Psoas muscle (tissue), 8 donors: ENCODE measurements at regions of chr12 and their contacts with region 1.

Region 1: DNA sequence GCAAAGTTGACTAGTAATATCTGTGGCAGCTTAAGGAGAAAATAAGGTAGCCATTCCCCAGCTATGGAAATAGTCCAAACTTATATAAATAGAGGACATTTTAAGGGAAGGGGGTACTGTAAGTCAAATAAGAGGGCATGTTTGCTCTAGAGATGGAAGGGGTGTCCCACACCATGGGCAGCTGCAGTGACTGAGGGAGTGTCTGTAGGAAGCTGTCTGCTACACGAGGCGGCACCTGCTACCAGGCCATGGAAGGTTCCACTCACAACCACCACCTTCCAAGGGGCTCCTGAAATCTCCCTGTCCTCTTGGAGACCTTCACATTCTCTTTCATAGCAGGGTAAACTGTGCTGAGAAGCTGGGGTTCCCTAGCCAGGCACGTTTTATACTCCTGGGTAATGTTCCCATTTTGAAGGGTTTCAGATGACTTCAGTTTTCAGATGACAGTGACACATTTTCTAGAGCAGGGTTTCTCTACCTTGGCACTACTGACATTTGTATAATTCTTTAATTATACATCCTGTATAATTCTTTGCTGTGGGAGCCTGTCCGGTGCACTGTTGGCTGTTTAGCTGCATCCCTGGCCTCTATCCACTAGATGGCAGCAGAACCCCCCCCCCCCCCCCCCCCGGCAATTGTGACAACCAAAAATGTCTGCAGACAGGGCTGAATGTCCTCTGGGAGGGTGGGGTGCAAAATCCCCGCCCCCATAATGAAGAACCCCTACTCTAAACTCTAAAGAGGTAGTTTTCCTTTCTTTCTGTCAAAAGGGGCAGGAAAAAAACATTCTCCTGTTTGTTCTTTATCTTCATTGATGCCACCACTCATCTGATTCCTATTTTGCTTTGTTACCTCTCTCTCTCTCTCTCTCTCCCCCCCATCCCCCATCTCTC is 11.6 kb upstream of the SMCO2 start:
- DNase-seq: peak in 1 of 2 donors; percentile 10
- ATAC-seq: peak in 2 of 4 donors; percentile 53 to 73
- H3K4me3 ChIP-seq: no peak overlapping the region
- H3K27ac ChIP-seq: no peak overlapping the region
- H3K4me1 ChIP-seq: no peaks in the 10 kb centered on the region
- H3K27me3 ChIP-seq: peaks cover 0 to under 1% (median 0%) of the 10 kb centered on the region in 3 donors
- CTCF ChIP-seq: peak; percentile 40

Region 2: DNA sequence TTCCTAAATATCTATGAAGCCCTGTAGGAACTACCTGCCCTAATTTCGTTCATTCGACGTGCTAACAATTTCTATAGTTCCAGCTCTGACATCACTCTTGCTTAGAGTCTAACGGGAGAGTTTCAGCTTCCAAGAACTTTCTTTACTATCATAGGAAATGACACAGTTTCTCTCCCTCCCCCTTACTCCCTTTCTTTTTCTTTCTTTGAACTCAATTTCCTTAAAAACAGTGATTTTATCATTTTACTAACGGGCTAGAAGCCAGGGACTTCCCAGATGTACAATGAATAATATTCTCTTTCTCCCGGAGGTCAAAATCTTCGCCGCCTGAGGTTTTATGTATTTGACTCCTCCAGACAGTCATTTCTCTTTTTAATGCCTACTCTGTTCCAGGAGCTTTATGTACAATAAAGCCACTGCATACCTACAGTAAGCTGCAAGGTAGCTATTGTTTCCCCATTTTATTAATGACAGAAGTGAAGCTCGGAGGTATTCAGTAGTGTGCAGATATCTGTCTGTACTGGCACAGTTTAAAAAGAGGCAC is 27.3 kb after region 1 on chr12:
- intact Hi-C with region 1: no loop called
- DNase-seq: no peak
- ATAC-seq: no peak
- H3K4me3 ChIP-seq: no peak overlapping the region
- H3K27ac ChIP-seq: no peak overlapping the region
- H3K4me1 ChIP-seq: no peaks in the 10 kb centered on the region
- H3K27me3 ChIP-seq: peaks cover 0 to 4% (median 0%) of the 10 kb centered on the region in 3 donors
- CTCF ChIP-seq: no peak

Region 3: DNA sequence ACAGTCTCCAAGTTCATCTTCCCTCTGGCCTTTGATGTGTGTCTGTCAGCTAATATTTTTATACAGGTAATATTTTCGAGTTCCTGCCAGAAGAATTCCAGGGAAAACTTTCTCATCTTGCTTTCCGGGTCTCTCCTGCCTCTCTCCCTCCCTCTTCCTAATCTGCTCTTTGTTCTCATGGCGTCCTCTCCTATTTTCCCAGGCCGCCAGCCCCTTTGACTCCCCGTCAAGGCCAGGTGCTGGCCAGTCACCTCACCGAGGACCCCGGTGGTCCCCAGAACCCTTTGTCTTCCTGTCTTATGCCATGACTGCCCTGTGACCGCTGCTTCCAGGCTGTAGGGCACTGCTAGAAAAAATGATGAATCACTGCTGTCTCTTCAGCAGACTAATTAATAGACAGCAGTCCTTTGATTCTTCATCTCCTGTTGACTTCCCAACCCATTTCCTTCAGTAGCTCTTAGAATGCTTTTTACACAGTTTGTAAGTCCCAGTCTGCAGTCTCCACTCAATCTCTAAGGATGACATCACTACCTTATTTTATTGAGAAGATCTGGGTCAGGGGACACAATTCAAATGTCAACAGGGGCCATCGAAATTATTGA is 129.8 kb after region 1 on chr12:
- intact Hi-C with region 1: loop called (anchors 5 kb)
- DNase-seq: no peak
- ATAC-seq: no peak
- H3K4me3 ChIP-seq: no peak overlapping the region
- H3K27ac ChIP-seq: no peak overlapping the region
- H3K4me1 ChIP-seq: peaks cover 19% of the 10 kb centered on the region
- H3K27me3 ChIP-seq: no peaks in the 10 kb centered on the region
- CTCF ChIP-seq: no peak

Region 4: DNA sequence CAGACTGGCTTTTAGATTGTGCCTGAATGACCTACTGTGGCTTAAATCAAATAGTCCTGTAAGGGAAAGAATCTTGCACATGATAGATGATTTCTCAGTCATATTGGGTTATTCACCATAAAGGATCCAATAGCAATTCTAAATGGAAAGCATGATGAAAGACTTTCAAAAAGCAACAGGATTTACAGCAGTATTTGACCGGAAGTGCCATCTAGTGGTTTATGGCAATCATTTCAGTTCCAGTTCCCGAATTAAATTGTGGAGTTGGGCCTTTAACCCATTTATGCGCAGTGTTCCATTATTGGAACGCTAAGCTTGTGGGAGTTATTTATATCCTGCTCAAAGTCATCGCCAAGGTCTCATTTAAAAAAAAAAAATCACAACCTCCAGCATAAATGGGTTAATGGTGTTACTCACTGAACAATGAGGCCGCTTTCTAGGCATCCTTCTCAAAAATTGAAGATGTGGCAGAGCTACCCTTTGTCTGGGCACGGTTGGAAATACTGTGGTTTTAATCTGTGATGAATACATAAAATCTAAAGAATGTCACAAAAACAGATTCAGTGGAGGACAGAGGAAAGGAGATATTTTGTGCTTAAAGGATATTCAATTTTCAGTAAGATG is 200.5 kb after region 1 on chr12:
- intact Hi-C with region 1: loop called in 1 of 2 experiments (anchors 5 kb)
- DNase-seq: no peak
- ATAC-seq: peak in 3 of 4 donors; percentile 37 to 65 (median 39)
- H3K4me3 ChIP-seq: no peak overlapping the region
- H3K27ac ChIP-seq: no peak overlapping the region
- H3K4me1 ChIP-seq: peaks cover 16% of the 10 kb centered on the region
- H3K27me3 ChIP-seq: no peaks in the 10 kb centered on the region
- CTCF ChIP-seq: peak; percentile 66

Region 5: DNA sequence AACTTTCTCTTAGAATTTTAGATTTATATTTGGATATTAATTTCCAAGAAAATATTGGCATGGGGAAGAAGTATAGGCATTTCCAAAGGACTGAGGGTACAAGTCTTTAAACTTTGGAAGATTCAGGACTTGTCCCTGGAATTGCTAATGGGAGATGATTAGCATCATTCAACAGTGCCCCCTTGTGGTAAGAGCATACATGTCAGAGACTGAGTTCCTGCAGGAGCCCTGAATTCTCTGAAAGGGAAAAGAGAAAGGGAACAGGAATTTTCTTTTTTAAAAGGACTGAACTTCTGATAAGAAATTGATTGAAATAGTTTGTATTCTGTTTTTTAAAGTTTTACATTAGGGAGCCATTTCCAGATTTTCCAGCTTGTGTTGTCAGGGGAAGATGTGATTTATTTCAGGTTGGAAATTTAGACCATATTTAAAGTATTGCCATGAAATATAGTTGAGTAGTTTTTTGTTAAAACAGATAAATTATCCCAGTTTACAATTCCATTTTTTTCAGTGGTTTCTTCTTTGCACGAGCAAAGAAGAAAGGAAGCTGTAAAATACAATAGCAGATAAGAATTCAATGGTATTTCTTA is 217.3 kb after region 1 on chr12:
- intact Hi-C with region 1: loop called (anchors 2 to 5 kb)
- DNase-seq: no peak
- ATAC-seq: peak; percentile 69 to 91 (median 80)
- H3K4me3 ChIP-seq: no peak overlapping the region
- H3K27ac ChIP-seq: no peak overlapping the region
- H3K4me1 ChIP-seq: no peaks in the 10 kb centered on the region
- H3K27me3 ChIP-seq: no peaks in the 10 kb centered on the region
- CTCF ChIP-seq: peak; percentile 90